ENCODE measurements at regions of chr3 and their contacts with region 1.

Region 1: DNA sequence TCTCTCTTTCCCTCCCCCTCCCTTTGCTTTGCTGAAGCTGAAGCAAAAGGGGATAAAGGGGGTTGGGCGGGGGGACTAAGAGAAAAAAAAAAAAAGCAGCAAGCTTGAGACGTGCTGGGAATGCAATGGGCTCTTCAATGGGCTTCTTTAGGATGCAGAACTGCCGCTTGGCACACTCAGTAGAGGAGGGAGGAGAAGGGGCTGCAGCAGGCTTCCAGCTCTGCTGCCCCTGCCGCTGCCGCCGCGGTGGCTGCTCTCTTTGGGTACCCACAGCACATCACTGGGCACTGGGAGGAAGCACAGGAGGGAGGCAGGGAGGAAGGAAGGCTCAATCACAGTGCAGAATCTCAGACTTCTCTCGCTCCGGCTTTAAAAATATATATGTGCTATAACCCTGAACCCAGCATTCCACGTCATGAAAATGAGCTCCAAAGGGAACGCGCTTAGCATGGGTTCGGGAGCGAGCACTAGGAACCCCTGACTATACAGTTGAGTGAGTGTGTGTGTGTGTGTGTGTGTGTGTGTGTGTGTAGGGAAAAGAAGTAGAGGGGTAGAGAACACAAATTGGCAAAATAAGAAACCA is 3.5 kb downstream of the SLITRK3 start:
- DNase-seq: no peak
- H3K4me3 ChIP-seq: no peak overlapping the region
- H3K27ac ChIP-seq: no peak overlapping the region
- H3K4me1 ChIP-seq: peaks cover 4 to 23% (median 11%) of the 10 kb centered on the region in 4 experiments
- H3K27me3 ChIP-seq: peaks cover 32 to 77% (median 40%) of the 10 kb centered on the region in 5 experiments

Region 2: DNA sequence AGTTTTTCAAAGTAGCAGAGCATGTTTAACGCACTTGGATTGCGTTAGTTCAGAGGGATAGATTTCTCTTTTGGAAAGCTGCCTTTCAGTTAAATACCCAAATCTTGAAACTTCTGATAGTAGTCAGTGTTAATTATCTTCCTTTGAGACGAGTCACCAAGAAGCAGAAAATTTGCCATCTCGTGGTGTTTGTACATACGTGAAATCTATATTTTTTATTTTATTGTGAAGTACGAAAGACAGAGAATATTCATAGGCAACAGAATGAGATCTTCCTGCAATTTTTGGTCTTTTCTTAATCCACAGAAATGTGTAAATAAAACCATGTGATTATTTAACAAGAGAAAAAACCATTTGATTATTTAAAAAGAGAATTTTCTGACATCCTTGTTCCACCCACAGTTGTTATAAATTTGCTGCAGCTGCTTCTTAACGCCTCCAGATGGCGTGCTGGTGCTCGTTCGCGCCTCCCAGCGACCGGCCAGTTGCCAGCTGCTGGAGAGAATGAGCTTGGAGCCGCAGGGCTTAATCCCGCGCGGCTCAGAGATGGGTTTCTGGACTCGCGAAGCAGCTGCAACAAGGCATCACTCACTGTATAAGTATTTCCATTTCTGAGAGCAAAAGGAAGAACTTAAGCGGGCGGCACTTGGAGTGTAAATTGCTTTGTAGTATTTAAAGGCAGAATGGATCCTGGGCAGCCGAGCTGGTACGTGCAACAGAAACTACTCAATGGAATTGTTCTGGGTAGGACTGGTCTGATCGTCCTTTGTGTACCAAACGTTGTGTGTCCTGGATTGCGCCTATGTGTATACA is 14.0 kb after region 1 on chr3:
- CTCF ChIA-PET with region 1: interaction called, 12 read pairs
- POLR2A ChIA-PET with region 1: no interaction called
- DNase-seq: peak; percentile 67 to 84 (median 83)
- H3K4me3 ChIP-seq: peak overlapping the region in 6 of 7 experiments; percentile 21 to 63 (median 30)
- H3K27ac ChIP-seq: no peak overlapping the region
- H3K4me1 ChIP-seq: peaks cover 0 to 3% (median 2%) of the 10 kb centered on the region in 4 experiments
- H3K27me3 ChIP-seq: peaks cover 3 to 23% (median 5%) of the 10 kb centered on the region in 5 experiments

Measured in common myeloid progenitor, CD34-positive (primary cell).